ENCODE measurements at regions of chr7 and their contacts with region 1.

Region 1: GRCh38 chr7:48118041-48118440 is 29.0 kb downstream of the UPP1 start:
- DNase-seq: no peak
- CTCF ChIP-seq: no peak

Region 2: GRCh38 chr7:48101968-48102367 is 16.1 kb before region 1 on chr7:
- CTCF ChIA-PET with region 1: interaction called, 12 read pairs
- POLR2A ChIA-PET with region 1: no interaction called
- DNase-seq: no peak
- CTCF ChIP-seq: no peak